OCI-LY7 (cell line): ENCODE measurements at regions of chr11 and their contacts with region 1.

Region 1: GRCh38 chr11:36746886-36747710 is 149.1 kb upstream of the RAG2 start:
- DNase-seq: peak; percentile 85
- H3K4me3 ChIP-seq: no peak overlapping the region
- H3K27ac ChIP-seq: no peak overlapping the region
- H3K4me1 ChIP-seq: no peaks in the 10 kb centered on the region
- CTCF ChIP-seq: peak; percentile 100

Region 2: GRCh38 chr11:36564376-36565030 is 182.6 kb before region 1 on chr11:
- CTCF ChIA-PET with region 1: interaction called, 5 read pairs
- POLR2A ChIA-PET with region 1: no interaction called
- intact Hi-C with region 1: loop called (anchors 1 kb)
- DNase-seq: peak; percentile 50
- H3K4me3 ChIP-seq: no peak overlapping the region
- H3K27ac ChIP-seq: no peak overlapping the region
- H3K4me1 ChIP-seq: no peaks in the 10 kb centered on the region
- CTCF ChIP-seq: peak; percentile 79

Region 3: GRCh38 chr11:36702330-36703055 is 44.6 kb before region 1 on chr11:
- CTCF ChIA-PET with region 1: interaction called, 5 read pairs
- POLR2A ChIA-PET with region 1: interaction called, 4 read pairs
- intact Hi-C with region 1: loop called (anchors 2 kb)
- DNase-seq: peak; percentile 46
- H3K4me3 ChIP-seq: no peak overlapping the region
- H3K27ac ChIP-seq: no peak overlapping the region
- H3K4me1 ChIP-seq: no peaks in the 10 kb centered on the region
- CTCF ChIP-seq: peak; percentile 81

Region 4: GRCh38 chr11:36822829-36823228 is 75.7 kb after region 1 on chr11:
- CTCF ChIA-PET with region 1: no interaction called
- POLR2A ChIA-PET with region 1: no interaction called
- intact Hi-C with region 1: no loop called
- DNase-seq: no peak
- H3K4me3 ChIP-seq: no peak overlapping the region
- H3K27ac ChIP-seq: no peak overlapping the region
- H3K4me1 ChIP-seq: no peaks in the 10 kb centered on the region
- CTCF ChIP-seq: no peak

Region 5: DNA sequence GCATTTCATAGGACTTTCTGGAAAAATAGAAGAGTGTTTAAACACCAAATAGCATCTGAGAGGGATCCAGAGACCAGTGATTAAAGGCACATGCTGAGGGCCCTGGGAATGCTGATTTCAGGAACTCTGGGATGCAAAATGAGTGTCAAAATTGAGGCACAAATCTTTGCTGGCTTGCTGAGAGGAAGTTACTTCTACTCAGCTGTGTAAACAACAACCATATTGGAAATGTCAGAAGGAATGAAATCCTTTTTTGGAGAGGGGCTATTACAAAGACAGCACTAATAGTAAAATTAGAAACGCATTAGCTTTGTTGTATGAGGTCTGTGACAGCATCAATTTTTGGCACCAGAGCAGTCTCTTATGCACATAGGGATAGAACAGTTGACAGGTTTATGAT is 118.7 kb after region 1 on chr11:
- CTCF ChIA-PET with region 1: no interaction called
- POLR2A ChIA-PET with region 1: no interaction called
- intact Hi-C with region 1: no loop called
- DNase-seq: no peak
- H3K4me3 ChIP-seq: no peak overlapping the region
- H3K27ac ChIP-seq: no peak overlapping the region
- H3K4me1 ChIP-seq: no peaks in the 10 kb centered on the region
- CTCF ChIP-seq: no peak